ENCODE measurements at regions of chr17 and their contacts with region 1.

Region 1: GRCh38 chr17:50853015-50853615 is 13.0 kb downstream of the TOB1 start:
- DNase-seq: no peak
- ATAC-seq: no peak
- H3K4me3 Mint-ChIP-seq: peak overlapping the region in 8 of 10 donors; percentile 70 to 88 (median 84)
- H3K27ac Mint-ChIP-seq: peak overlapping the region in 9 of 10 donors; percentile 87 to 96 (median 93)
- H3K4me1 Mint-ChIP-seq: peaks cover 11 to 28% (median 23%) of the 10 kb centered on the region in 4 donors
- H3K27me3 Mint-ChIP-seq: no peaks in the 10 kb centered on the region

Region 2: GRCh38 chr17:50949989-50950881 is 97.1 kb after region 1 on chr17:
- POLR2A ChIA-PET with region 1: interaction called, 535 read pairs
- DNase-seq: peak; percentile 34 to 84 (median 50)
- ATAC-seq: peak; percentile 92 to 95
- H3K4me3 Mint-ChIP-seq: peak overlapping the region in 3 of 10 donors; percentile 33 to 54 (median 45)
- H3K27ac Mint-ChIP-seq: peak overlapping the region in 9 of 10 donors; percentile 49 to 90 (median 70)
- H3K4me1 Mint-ChIP-seq: peaks cover 15 to 41% (median 36%) of the 10 kb centered on the region in 4 donors
- H3K27me3 Mint-ChIP-seq: no peaks in the 10 kb centered on the region

Region 3: GRCh38 chr17:50956750-50957523 is 103.8 kb after region 1 on chr17:
- POLR2A ChIA-PET with region 1: interaction called, 535 read pairs
- DNase-seq: peak; percentile 44 to 83 (median 64)
- ATAC-seq: peak; percentile 95 to 96
- H3K4me3 Mint-ChIP-seq: no peak overlapping the region
- H3K27ac Mint-ChIP-seq: peak overlapping the region in 6 of 10 donors; percentile 12 to 87 (median 78)
- H3K4me1 Mint-ChIP-seq: peaks cover 2 to 6% (median 3%) of the 10 kb centered on the region in 4 donors
- H3K27me3 Mint-ChIP-seq: no peaks in the 10 kb centered on the region